ENCODE measurements at regions of chr12 and their contacts with region 1.

Region 1: DNA sequence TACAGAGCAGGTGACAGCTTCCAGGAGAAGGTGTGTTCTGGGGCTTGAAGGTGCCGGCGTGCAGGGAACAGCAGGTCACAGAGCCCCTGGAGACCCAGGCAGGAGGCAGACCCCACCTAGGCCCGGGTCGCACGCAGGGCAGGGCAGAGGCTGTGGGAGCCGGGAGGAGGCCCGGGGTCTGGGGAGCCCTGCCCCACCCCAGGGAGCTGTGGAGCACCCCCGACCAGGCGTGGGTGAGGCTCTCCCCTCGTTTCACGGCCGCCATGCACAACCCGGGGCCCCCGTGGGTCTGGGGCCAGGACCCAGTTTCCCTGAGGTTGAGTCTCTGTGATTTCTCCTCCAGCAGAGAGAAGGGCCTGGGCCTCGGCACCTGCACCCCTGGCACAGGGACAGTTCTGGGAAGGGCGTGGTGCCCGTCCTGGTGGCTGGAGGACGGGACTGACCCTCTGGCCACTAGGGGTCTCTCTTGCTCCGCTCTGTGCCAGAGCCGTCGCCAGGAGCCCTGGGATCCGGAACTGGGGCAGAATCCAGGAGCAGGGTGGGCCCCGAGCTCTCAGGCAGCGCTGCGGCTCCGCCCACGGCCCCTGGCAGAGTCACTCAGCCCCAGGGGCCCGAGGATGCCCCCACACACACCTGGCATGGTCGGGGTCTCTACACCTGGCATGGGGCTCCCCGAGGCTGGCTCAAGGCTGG is 75.2 kb upstream of the FBRSL1 start:
- H3K4me3 Mint-ChIP-seq: no peak overlapping the region
- H3K27ac Mint-ChIP-seq: no peak overlapping the region
- H3K4me1 Mint-ChIP-seq: peaks cover 15% of the 10 kb centered on the region
- H3K27me3 Mint-ChIP-seq: peaks cover 40% of the 10 kb centered on the region

Region 2: DNA sequence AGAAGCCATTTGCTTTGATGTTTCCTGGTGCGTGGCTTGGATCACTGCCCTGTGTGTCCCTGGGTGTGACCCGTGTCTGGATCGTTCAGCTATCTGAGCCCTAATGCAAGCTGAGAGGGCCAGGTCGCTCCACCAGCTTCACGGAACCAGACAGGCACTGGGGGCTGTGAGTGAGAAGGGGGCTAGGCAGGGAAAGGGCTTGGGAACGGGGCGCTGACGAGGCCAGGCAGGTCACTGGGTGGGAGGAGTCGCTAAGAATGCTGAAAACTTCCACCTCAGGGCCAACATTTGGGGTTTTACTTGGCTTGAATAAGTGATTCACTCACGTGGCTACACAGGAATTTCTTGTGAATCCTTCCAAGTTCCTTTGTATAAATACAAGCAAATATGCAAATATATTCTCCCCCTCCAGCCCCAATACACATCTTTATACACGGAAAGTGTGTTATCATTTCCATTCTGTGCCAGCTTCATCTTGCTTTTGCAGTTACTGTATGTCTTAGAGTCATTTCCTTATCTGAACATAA is 610.7 kb before region 1 on chr12:
- intact Hi-C with region 1: no loop called
- H3K4me3 Mint-ChIP-seq: peak overlapping the region; percentile 50
- H3K27ac Mint-ChIP-seq: peak overlapping the region; percentile 91
- H3K4me1 Mint-ChIP-seq: peaks cover 26% of the 10 kb centered on the region
- H3K27me3 Mint-ChIP-seq: no peaks in the 10 kb centered on the region

Region 3: GRCh38 chr12:132133952-132134625 is 280.7 kb before region 1 on chr12:
- intact Hi-C with region 1: no loop called
- H3K4me3 Mint-ChIP-seq: no peak overlapping the region
- H3K27ac Mint-ChIP-seq: no peak overlapping the region
- H3K4me1 Mint-ChIP-seq: no peaks in the 10 kb centered on the region
- H3K27me3 Mint-ChIP-seq: no peaks in the 10 kb centered on the region

Region 4: DNA sequence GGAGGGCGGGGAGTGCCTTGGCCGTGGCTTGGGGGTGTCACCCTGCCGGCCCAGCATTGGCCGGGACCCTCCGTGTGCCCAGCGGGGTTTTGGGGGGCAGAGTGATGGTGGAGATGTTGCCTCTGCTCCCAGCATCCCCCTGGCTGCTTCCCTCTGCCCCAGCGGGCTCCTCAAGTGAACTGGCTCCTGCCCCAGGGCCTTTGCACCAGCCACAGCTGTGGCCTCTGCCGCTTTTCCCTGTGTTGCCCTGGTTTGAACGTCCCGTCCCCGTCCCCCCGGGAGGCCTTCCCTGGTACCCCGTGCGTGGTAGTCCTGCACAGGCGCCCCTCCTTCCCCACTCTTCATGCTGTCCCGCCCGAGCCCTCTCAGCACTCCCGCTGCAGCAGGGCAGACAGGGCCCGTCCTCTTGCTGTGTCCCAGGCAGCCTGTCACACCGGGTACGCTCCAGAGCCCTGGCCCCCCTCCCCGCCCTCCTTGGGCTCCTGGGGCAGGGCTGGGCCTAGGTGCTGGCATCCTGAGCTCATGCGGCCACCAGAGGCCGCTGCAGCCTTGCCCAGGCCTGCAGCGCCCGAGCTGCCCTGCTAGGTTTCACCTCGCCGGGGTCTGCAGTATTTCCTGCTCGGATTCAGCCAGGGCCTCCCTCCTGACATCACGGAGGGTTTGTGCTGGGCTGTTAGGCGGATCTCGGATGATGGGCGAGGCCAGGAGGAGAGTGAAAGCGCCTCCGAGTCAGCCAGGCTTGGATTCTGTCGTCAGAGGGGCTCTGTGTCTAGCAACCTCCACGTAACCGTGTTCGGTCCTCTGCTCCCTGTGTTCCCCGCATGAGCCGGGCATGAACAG is 261.1 kb before region 1 on chr12:
- intact Hi-C with region 1: loop called (anchors 10 kb)
- H3K4me3 Mint-ChIP-seq: no peak overlapping the region
- H3K27ac Mint-ChIP-seq: no peak overlapping the region
- H3K4me1 Mint-ChIP-seq: no peaks in the 10 kb centered on the region
- H3K27me3 Mint-ChIP-seq: no peaks in the 10 kb centered on the region

Region 5: GRCh38 chr12:132449565-132450417 is 35.0 kb after region 1 on chr12:
- intact Hi-C with region 1: no loop called
- H3K4me3 Mint-ChIP-seq: no peak overlapping the region
- H3K27ac Mint-ChIP-seq: no peak overlapping the region
- H3K4me1 Mint-ChIP-seq: peaks cover 20% of the 10 kb centered on the region
- H3K27me3 Mint-ChIP-seq: peaks cover 58% of the 10 kb centered on the region

Region 6: GRCh38 chr12:132506328-132507160 is 91.8 kb after region 1 on chr12:
- intact Hi-C with region 1: loop called (anchors 5 kb)
- H3K4me3 Mint-ChIP-seq: peak overlapping the region; percentile 62
- H3K27ac Mint-ChIP-seq: peak overlapping the region; percentile 88
- H3K4me1 Mint-ChIP-seq: peaks cover 71% of the 10 kb centered on the region
- H3K27me3 Mint-ChIP-seq: peaks cover 25% of the 10 kb centered on the region

Region 7: DNA sequence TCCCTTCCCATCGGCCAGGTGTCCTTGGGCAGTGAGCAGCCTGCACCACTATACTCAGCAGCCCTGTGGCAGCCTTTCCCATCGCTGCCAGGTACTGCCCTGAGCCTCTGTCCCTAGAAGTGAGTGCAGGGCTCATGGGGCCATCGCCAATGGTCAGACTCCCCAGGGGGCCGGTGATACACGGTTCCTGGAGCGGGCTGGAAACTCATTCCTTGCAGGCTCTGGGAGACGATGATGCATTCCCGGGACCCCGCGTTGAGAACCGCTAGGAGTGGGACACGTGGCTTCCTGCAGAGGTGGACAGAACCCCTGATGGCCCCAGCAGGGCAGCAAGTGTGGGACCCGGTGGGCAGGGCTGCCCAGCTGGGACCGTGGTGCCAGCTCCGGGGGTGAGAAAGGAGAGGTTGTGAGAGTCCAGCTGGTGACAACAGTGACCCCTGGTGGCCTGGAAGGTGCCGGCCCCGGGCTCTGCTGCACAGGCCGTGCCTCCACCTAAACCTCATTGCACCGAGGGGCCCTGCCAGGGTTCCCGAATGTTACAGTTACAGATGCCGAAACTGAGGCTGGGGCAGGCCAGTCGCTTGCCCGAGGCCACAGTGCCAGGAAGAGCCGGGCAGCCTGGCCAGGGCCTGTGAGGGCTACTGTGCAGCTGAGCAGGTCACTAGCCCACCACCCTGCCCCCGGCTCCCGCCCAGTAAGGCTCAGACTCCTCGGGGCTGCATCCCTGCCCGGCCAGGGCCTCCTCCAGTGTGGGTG is 109.0 kb after region 1 on chr12:
- intact Hi-C with region 1: loop called (anchors 1 kb)
- H3K4me3 Mint-ChIP-seq: no peak overlapping the region
- H3K27ac Mint-ChIP-seq: no peak overlapping the region
- H3K4me1 Mint-ChIP-seq: peaks cover 32% of the 10 kb centered on the region
- H3K27me3 Mint-ChIP-seq: no peaks in the 10 kb centered on the region

Region 8: GRCh38 chr12:132560614-132561426 is 146.0 kb after region 1 on chr12:
- intact Hi-C with region 1: loop called (anchors 2 kb)
- H3K4me3 Mint-ChIP-seq: peak overlapping the region; percentile 34
- H3K27ac Mint-ChIP-seq: no peak overlapping the region
- H3K4me1 Mint-ChIP-seq: peaks cover 23% of the 10 kb centered on the region
- H3K27me3 Mint-ChIP-seq: peaks cover 45% of the 10 kb centered on the region

Region 9: GRCh38 chr12:132614861-132615578 is 200.2 kb after region 1 on chr12:
- intact Hi-C with region 1: loop called (anchors 1 kb)
- H3K4me3 Mint-ChIP-seq: no peak overlapping the region
- H3K27ac Mint-ChIP-seq: no peak overlapping the region
- H3K4me1 Mint-ChIP-seq: peaks cover 14% of the 10 kb centered on the region
- H3K27me3 Mint-ChIP-seq: peaks cover 82% of the 10 kb centered on the region